ENCODE measurements at regions of chr4 and their contacts with region 1.

Region 1: GRCh38 chr4:84966383-84967242 is at the start of gene WDFY3:
- DNase-seq: peak; percentile 81

Region 2: GRCh38 chr4:84578540-84579402 is 387.8 kb before region 1 on chr4:
- CTCF ChIA-PET with region 1: interaction called, 9 read pairs
- POLR2A ChIA-PET with region 1: interaction called, 12 read pairs
- DNase-seq: no peak

Region 3: DNA sequence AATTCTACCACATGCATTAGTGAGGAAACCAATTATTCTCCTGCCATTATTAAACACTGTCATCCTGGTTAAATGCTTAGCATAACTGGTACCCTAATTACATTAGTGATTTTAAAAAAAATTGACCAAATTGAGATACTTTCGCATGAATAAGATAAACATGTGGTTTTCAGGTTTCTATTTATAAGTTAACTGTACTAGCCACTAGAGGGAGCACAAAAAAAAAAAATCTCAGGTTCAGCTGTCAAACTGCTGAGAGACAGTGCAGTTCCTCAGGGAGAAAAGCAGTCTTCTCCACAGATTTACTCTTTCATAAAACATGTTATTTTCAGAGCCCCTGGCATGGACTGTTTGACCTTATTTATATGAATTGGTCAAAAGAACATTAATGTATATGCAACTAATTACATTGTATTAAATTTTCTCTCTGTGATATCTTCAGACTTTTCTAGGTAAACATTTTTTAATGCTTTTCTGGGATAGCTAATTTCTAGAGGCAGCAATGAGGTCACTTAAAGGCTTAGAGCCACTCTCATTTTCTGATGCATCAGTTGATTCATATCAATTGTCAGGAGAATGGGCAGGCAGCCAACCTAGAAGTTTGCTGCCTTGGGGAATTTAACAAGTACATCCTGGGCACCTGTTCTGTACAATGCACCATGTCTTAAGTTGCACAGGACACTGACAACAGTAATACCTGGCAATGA is 216.2 kb before region 1 on chr4:
- CTCF ChIA-PET with region 1: interaction called, 11 read pairs
- POLR2A ChIA-PET with region 1: interaction called, 12 read pairs
- DNase-seq: peak; percentile 56